ENCODE measurements at regions of chr3 and their contacts with region 1.

Region 1: DNA sequence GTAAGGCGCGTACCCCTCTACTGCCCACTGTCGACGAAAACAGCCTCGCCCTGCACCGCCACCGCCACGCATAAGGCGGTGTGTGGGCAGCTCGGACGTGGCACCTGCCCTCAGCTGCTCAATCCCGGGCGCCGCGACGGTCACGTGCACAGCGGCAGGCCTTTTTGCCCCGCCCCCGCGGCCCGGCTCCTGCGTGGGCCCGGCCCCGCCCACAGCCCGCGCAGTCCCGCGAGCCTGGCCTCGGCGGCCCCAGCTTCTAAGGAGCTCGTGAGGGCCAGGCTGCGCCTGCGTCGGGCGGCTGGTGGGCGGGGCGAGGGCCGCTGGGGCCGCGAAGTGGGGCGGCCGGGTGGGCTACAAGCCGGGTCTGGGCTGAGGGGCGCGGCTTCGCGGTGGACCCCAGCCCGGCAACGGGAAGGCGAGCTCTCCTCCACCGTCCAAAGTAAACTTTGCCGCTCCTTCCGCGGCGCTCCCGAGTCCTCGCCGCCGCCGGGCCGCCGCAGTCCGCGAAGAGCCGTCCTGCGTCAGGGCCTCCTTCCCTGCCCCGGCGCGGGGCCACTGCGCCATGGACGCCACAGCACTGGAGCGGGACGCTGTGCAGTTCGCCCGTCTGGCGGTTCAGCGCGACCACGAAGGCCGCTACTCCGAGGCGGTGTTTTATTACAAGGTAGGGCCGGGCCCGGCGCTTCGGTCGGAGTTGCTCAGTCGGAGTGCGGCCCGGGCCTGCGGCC is at the start of gene CAPN7:
- DNase-seq: peak; percentile 80
- ATAC-seq: peak; percentile 81
- H3K4me3 Mint-ChIP-seq: peak within 1 kb of the TSS; percentile 82
- H3K27ac Mint-ChIP-seq: peak within 1 kb of the TSS; percentile 47
- H3K4me1 Mint-ChIP-seq: peaks cover 11% of the 10 kb centered on the region
- H3K27me3 Mint-ChIP-seq: no peaks in the 10 kb centered on the region
- CTCF ChIP-seq: no peak
- total RNA-seq, gene CAPN7: 16.8 to 20.3 TPM (median 17.9 TPM) in 3 replicates

Region 2: DNA sequence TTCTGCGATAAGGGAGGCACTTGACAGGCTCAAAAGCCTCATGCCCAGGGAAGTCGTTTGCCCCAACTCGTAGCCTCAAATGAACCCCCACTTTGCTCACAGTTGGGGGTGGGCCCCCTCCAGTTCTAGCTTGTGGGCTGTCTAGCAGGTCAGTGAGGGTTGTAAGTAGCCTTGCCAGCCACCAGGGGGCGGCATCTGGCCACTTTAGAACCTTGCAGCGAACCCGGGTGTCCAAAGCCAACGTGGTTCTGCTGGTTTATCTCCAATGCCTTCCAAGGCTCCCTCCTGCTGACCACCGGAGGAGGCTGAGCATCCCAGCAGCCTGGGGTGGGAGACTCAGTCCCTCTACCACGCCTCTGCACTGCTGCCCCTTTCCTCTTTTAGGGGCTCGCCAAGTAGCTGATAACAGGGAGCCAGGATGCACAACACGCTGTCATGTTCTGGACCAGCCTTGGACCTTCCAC is 98.0 kb before region 1 on chr3:
- CTCF ChIA-PET with region 1: interaction called, 20 read pairs
- POLR2A ChIA-PET with region 1: no interaction called
- DNase-seq: peak; percentile 85
- ATAC-seq: peak; percentile 92
- H3K4me3 Mint-ChIP-seq: no peak overlapping the region
- H3K27ac Mint-ChIP-seq: no peak overlapping the region
- H3K4me1 Mint-ChIP-seq: peaks cover 9% of the 10 kb centered on the region
- H3K27me3 Mint-ChIP-seq: no peaks in the 10 kb centered on the region
- CTCF ChIP-seq: peak; percentile 97

Region 3: GRCh38 chr3:15113463-15113862 is 92.6 kb before region 1 on chr3:
- CTCF ChIA-PET with region 1: interaction called, 38 read pairs
- POLR2A ChIA-PET with region 1: no interaction called
- DNase-seq: no peak
- ATAC-seq: no peak
- H3K4me3 Mint-ChIP-seq: no peak overlapping the region
- H3K27ac Mint-ChIP-seq: no peak overlapping the region
- H3K4me1 Mint-ChIP-seq: peaks cover 25% of the 10 kb centered on the region
- H3K27me3 Mint-ChIP-seq: peaks cover 17% of the 10 kb centered on the region
- CTCF ChIP-seq: no peak

Region 4: GRCh38 chr3:15120986-15121385 is 85.1 kb before region 1 on chr3:
- CTCF ChIA-PET with region 1: interaction called, 38 read pairs
- POLR2A ChIA-PET with region 1: no interaction called
- DNase-seq: no peak
- ATAC-seq: no peak
- H3K4me3 Mint-ChIP-seq: no peak overlapping the region
- H3K27ac Mint-ChIP-seq: no peak overlapping the region
- H3K4me1 Mint-ChIP-seq: peaks cover 4% of the 10 kb centered on the region; the same call in 1 of the 2 replicates
- H3K27me3 Mint-ChIP-seq: peaks cover 29% of the 10 kb centered on the region
- CTCF ChIP-seq: no peak

Region 5: DNA sequence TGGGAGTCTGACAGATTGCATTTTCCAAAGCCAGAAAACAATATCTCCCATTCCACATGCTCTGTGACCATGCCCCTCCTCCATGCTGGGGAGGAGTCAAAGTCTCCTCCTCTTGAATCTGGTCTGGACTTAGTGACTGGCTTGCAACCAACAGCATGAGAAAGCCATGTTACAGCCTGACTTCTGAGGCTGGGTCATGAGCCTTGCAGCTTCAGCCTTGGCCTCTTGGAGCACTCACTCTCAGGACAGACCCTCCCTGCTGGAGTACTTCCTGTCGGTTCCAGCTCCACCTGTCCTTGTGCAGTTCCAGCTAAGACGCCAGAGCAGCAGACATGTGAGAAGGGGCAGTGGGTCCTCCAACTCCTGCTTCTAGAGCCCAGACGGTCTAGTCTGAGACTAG is 57.5 kb before region 1 on chr3:
- CTCF ChIA-PET with region 1: interaction called, 10 read pairs
- POLR2A ChIA-PET with region 1: no interaction called
- DNase-seq: peak; percentile 55
- ATAC-seq: peak; percentile 100
- H3K4me3 Mint-ChIP-seq: no peak overlapping the region
- H3K27ac Mint-ChIP-seq: no peak overlapping the region
- H3K4me1 Mint-ChIP-seq: peaks cover 4% of the 10 kb centered on the region; the same call in 1 of the 2 replicates
- H3K27me3 Mint-ChIP-seq: peaks cover 13% of the 10 kb centered on the region
- CTCF ChIP-seq: no peak

Region 6: DNA sequence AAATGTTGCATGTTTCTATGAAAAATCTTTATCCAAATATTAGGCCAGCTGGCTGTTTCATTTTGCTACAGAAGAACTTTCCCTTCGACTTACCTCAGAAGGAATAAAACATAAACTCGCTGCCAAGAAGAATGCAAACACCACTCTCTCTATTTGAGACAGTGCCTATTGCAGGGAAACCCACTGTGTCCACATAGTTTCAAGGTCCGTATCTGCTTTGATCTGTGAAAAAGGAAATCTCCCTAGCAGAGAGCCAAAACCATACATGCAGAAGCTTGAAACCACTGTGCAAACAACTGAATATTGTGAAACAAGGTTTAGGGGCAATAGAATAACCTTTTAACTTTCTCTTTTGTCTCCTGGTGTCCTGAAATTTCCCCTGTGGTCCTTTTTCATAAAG is 35.0 kb before region 1 on chr3:
- CTCF ChIA-PET with region 1: no interaction called
- POLR2A ChIA-PET with region 1: no interaction called
- DNase-seq: no peak
- ATAC-seq: no peak
- H3K4me3 Mint-ChIP-seq: no peak overlapping the region
- H3K27ac Mint-ChIP-seq: no peak overlapping the region
- H3K4me1 Mint-ChIP-seq: no peaks in the 10 kb centered on the region
- H3K27me3 Mint-ChIP-seq: peaks cover 34% of the 10 kb centered on the region
- CTCF ChIP-seq: no peak

Measured in WTC11 (cell line).